GM12878 (cell line): ENCODE measurements at regions of chr22 and their contacts with region 1.

Region 1: GRCh38 chr22:39490135-39490798 is 11.8 kb upstream of the MIEF1 start:
- DNase-seq: no peak
- ATAC-seq: peak; percentile 99
- H3K4me3 ChIP-seq: no peak overlapping the region
- H3K27ac ChIP-seq: no peak overlapping the region
- H3K4me1 ChIP-seq: peaks cover 7% of the 10 kb centered on the region; the same call in 1 of the 2 replicates
- H3K27me3 ChIP-seq: no peaks in the 10 kb centered on the region
- CTCF ChIP-seq: no peak
- EP300 ChIP-seq: no peak
- POLR2A ChIP-seq: 0 out of 2 replicates have a peak, but pooled peaks have one; percentile 30
- RAD21 ChIP-seq: no peak

Region 2: GRCh38 chr22:37561212-37562048 is 1928.8 kb before region 1 on chr22:
- CTCF ChIA-PET with region 1: no interaction called
- POLR2A ChIA-PET with region 1: no interaction called
- RAD21 ChIA-PET with region 1: no interaction called
- SMC1A ChIA-PET with region 1: no interaction called
- in situ Hi-C with region 1: no loop called
- intact Hi-C with region 1: no loop called
- DNase-seq: no peak
- ATAC-seq: peak; percentile 80
- H3K4me3 ChIP-seq: 0 out of 2 replicates have a peak overlapping the region, but pooled peaks have one; percentile 11
- H3K27ac ChIP-seq: no peak overlapping the region
- H3K4me1 ChIP-seq: peaks cover 3% of the 10 kb centered on the region
- H3K27me3 ChIP-seq: peaks cover 16% of the 10 kb centered on the region in 2 experiments
- CTCF ChIP-seq: peak; percentile 58 to 82 (median 71)
- EP300 ChIP-seq: no peak
- POLR2A ChIP-seq: no peak
- RAD21 ChIP-seq: peak; percentile 29; the same call in 1 of the 2 replicates

Region 3: GRCh38 chr22:39292561-39293098 is 197.6 kb before region 1 on chr22:
- CTCF ChIA-PET with region 1: no interaction called
- POLR2A ChIA-PET with region 1: no interaction called
- RAD21 ChIA-PET with region 1: no interaction called
- SMC1A ChIA-PET with region 1: no interaction called
- in situ Hi-C with region 1: no loop called
- intact Hi-C with region 1: no loop called
- DNase-seq: no peak
- ATAC-seq: no peak
- H3K4me3 ChIP-seq: no peak overlapping the region
- H3K27ac ChIP-seq: no peak overlapping the region
- H3K4me1 ChIP-seq: peaks cover 4% of the 10 kb centered on the region; the same call in 1 of the 2 replicates
- H3K27me3 ChIP-seq: no peaks in the 10 kb centered on the region
- CTCF ChIP-seq: no peak
- EP300 ChIP-seq: no peak
- POLR2A ChIP-seq: no peak
- RAD21 ChIP-seq: no peak

Region 4: DNA sequence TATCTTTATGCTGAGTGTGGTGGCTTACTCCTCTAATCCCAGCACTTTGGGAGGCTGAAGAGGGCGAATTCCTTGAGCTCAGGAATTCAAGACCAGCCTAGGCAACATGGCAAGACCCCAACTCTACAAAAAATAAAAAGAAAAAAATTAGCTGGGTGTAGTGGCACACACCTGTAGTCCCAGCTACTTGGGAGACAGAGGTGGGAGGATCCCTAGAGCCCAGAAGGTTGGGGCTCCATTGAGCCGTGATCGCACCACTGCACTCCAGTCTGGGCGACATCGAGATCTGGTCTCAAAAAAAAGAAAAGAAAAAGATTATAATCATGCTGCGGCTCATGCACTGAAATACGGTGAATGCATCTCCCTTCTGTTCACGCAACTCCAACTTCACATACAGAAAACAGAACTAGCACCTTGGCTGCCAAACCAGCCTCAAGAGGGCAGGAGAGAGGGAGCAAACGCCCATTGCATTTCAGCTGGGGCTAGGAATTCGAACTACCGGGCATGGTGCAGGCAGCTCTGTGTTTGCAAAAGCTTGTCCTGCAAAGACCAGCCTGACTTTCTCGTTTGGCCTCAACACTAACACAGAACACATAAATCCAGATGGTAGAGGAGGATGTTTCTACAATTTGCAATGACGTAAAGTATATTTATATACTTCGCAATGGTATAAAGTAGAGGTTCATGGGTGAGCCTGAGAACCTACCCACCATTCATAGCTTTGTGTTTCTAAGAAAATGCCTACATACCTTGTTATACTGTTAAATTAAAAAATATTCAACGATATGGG is 146.8 kb before region 1 on chr22:
- CTCF ChIA-PET with region 1: interaction called, 13 read pairs
- POLR2A ChIA-PET with region 1: interaction called, 3 read pairs
- RAD21 ChIA-PET with region 1: interaction called, 3 read pairs
- SMC1A ChIA-PET with region 1: interaction called, 3 read pairs
- in situ Hi-C with region 1: no loop called
- intact Hi-C with region 1: no loop called
- DNase-seq: peak; percentile 36
- ATAC-seq: peak; percentile 95
- H3K4me3 ChIP-seq: no peak overlapping the region
- H3K27ac ChIP-seq: no peak overlapping the region
- H3K4me1 ChIP-seq: no peaks in the 10 kb centered on the region
- H3K27me3 ChIP-seq: peaks cover 0 to 1% of the 10 kb centered on the region in 2 experiments; a peak in 2 of 4 replicates
- CTCF ChIP-seq: peak; percentile 77 to 89 (median 80)
- EP300 ChIP-seq: no peak
- POLR2A ChIP-seq: no peak
- RAD21 ChIP-seq: peak; percentile 72

Region 5: DNA sequence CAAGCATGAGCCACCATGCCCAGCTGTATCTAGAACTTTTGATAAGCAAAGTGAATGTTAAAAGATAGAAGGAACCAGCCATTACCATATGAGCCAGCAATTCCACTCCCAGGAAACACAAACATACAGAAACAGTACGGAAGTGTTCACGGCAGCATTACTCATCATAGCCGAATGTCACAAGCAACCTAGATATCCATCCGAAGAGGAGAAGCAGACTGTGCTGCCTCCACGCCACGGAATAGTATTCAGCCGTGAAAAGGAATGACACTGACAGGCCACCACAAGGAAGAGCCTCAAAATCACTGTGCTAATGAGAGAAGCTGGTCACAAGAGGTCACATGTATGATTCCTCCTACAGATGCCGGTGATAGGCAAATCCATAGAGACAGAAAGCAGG is 51.1 kb before region 1 on chr22:
- CTCF ChIA-PET with region 1: interaction called, 22 read pairs
- POLR2A ChIA-PET with region 1: no interaction called
- RAD21 ChIA-PET with region 1: interaction called, 5 read pairs
- SMC1A ChIA-PET with region 1: interaction called, 8 read pairs
- in situ Hi-C with region 1: no loop called
- intact Hi-C with region 1: no loop called
- DNase-seq: no peak
- ATAC-seq: no peak
- H3K4me3 ChIP-seq: no peak overlapping the region
- H3K27ac ChIP-seq: no peak overlapping the region
- H3K4me1 ChIP-seq: peaks cover 42% of the 10 kb centered on the region
- H3K27me3 ChIP-seq: no peaks in the 10 kb centered on the region
- CTCF ChIP-seq: no peak
- EP300 ChIP-seq: no peak
- POLR2A ChIP-seq: no peak
- RAD21 ChIP-seq: no peak

Region 6: DNA sequence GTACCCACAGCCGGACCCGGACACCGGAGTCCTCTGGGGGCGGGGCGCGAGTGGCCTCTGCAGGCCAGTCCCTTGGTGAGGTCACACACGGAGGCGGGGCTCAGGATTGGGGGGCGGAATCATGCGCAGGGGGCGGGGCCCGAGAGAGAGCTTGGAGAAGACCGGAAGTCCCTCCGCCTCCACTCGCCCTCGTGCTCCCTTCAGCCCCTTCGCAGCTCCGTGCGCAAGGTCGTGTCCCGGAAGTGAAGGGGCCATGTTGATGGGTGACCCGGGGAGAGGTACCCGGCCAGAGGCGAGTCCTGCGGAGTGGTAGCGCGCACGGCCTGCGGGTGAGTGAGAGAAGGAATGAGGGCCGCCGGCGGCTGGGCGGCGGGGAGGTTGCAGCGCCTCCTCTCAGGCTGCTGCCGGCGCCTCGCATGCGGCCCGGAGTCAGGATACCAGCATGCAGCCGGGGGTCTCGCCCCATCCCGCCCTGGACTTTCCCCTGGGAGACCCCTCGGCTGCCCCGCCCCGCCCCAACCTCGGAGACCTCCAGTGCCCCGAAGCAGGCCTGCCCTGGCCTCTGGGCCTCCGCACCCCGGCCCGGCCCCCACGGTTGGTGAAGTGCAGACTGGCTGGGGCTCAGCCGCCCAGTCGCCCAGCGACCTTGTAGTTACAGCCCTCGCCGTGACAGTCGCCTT is 12.0 kb after region 1 on chr22 and contains the start of gene MIEF1:
- CTCF ChIA-PET with region 1: interaction called, 14 read pairs
- POLR2A ChIA-PET with region 1: interaction called, 4 read pairs
- RAD21 ChIA-PET with region 1: interaction called, 3 read pairs
- SMC1A ChIA-PET with region 1: interaction called, 4 read pairs
- in situ Hi-C with region 1: no loop called
- intact Hi-C with region 1: no loop called
- DNase-seq: peak; percentile 87
- ATAC-seq: peak; percentile 99
- H3K4me3 ChIP-seq: peak within 1 kb of the TSS; percentile 95
- H3K27ac ChIP-seq: peak within 1 kb of the TSS; percentile 73
- H3K4me1 ChIP-seq: 0 out of 2 replicates have a peak, but pooled peaks cover 5% of the 10 kb centered on the region
- H3K27me3 ChIP-seq: no peaks in the 10 kb centered on the region
- CTCF ChIP-seq: no peak
- EP300 ChIP-seq: no peak
- POLR2A ChIP-seq: peak; percentile 94
- RAD21 ChIP-seq: no peak
- polyA plus RNA-seq, gene MIEF1: 12.4 to 13.8 TPM

Region 7: DNA sequence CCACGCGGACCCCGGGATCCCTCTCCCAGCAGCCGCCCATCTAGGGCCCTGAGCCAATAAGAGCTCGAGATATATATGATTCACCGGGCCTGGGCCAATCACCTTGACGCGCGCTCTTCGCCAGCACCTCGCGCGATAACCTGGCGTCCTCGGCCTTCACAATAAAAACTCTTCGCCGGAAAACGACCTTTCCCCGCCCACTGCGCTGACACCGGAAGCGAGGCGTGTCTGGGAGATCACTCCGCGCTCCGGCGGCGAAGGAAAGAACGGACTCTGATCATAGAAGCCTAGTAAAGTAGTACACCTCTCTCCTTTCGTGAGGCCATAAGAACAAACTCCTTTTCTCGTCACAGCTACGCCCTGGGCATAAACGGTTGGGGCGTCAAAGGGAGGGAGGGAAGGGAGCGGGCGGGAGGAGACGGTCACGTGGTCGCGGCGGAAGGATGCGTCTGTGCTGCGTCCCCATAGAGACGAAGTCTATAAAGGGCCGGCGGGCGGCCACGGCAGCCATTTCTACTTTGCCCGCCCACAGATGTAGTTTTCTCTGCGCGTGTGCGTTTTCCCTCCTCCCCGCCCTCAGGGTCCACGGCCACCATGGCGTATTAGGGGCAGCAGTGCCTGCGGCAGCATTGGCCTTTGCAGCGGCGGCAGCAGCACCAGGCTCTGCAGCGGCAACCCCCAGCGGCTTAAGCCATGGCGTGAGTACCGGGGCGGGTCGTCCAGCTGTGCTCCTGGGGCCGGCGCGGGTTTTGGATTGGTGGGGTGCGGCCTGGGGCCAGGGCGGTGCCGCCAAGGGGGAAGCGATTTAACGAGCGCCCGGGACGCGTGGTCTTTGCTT is 30.0 kb after region 1 on chr22 and contains the start of gene ATF4:
- CTCF ChIA-PET with region 1: interaction called, 372 read pairs
- POLR2A ChIA-PET with region 1: interaction called, 6 read pairs
- RAD21 ChIA-PET with region 1: interaction called, 5 read pairs
- SMC1A ChIA-PET with region 1: interaction called, 4 read pairs
- in situ Hi-C with region 1: no loop called
- intact Hi-C with region 1: no loop called
- DNase-seq: peak; percentile 93
- ATAC-seq: peak; percentile 91
- H3K4me3 ChIP-seq: peak within 1 kb of the TSS; percentile 97
- H3K27ac ChIP-seq: peak within 1 kb of the TSS; percentile 96
- H3K4me1 ChIP-seq: peaks cover 23% of the 10 kb centered on the region
- H3K27me3 ChIP-seq: no peaks in the 10 kb centered on the region
- CTCF ChIP-seq: no peak
- EP300 ChIP-seq: no peak
- POLR2A ChIP-seq: peak; percentile 93
- RAD21 ChIP-seq: no peak
- polyA plus RNA-seq, gene ATF4: 88.3 to 187 TPM

Region 8: DNA sequence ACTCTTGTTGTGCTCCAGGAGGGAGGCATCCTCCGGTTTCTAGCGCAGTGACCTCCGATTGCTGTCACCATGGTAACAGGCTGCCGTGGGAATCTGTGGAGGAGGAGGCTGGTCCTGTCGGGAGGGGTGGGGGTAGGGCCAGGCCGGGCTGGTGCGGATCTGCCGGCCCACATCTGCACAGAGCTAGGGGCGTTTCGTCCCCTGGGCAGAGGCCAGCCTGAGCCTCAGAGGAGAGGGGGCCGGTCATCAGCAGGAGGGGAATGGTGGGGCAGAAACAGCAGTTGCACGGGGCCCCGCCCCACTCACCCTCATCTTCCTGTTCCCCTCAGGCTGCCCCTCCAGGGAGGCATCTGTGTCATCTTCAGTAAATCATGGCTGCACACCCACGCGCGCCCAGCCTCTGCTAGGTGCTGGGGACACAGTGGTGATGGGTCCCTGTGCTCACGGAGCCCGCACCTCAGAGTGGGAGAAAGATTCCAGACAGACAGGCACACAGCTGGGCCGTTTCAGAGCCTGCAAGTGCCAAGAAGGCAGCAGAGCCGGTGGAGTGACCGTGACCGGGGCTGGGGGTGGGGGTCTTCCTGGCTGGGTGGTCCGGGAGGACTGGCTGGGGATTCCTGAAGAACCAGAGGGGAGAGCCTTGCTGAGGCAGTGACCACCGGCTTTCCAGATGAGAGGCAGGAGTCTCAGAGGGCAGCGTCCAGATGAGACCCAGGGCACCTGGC is 200.8 kb after region 1 on chr22:
- CTCF ChIA-PET with region 1: no interaction called
- POLR2A ChIA-PET with region 1: no interaction called
- RAD21 ChIA-PET with region 1: no interaction called
- SMC1A ChIA-PET with region 1: no interaction called
- in situ Hi-C with region 1: no loop called
- intact Hi-C with region 1: no loop called
- DNase-seq: no peak
- ATAC-seq: no peak
- H3K4me3 ChIP-seq: no peak overlapping the region
- H3K27ac ChIP-seq: no peak overlapping the region
- H3K4me1 ChIP-seq: no peaks in the 10 kb centered on the region
- H3K27me3 ChIP-seq: peaks cover 0 to 4% of the 10 kb centered on the region in 2 experiments; a peak in 3 of 4 replicates
- CTCF ChIP-seq: no peak
- EP300 ChIP-seq: no peak
- POLR2A ChIP-seq: no peak
- RAD21 ChIP-seq: no peak

Region 9: GRCh38 chr22:40044102-40044869 is 554.0 kb after region 1 on chr22:
- CTCF ChIA-PET with region 1: no interaction called
- POLR2A ChIA-PET with region 1: no interaction called
- RAD21 ChIA-PET with region 1: no interaction called
- SMC1A ChIA-PET with region 1: no interaction called
- in situ Hi-C with region 1: loop called (anchors 5 kb)
- intact Hi-C with region 1: loop called (anchors 5 kb)
- DNase-seq: peak; percentile 99
- ATAC-seq: peak; percentile 97
- H3K4me3 ChIP-seq: peak overlapping the region; percentile 72
- H3K27ac ChIP-seq: peak overlapping the region; percentile 81
- H3K4me1 ChIP-seq: peaks cover 9% of the 10 kb centered on the region
- H3K27me3 ChIP-seq: 0 out of 4 replicates have a peak, but pooled peaks cover 0 to 1% of the 10 kb centered on the region in 2 experiments
- CTCF ChIP-seq: no peak
- EP300 ChIP-seq: no peak
- POLR2A ChIP-seq: peak; percentile 94
- RAD21 ChIP-seq: no peak